Ascending aorta (tissue), 2 donors: ENCODE measurements at regions of chr18 and their contacts with region 1.

Region 1: DNA sequence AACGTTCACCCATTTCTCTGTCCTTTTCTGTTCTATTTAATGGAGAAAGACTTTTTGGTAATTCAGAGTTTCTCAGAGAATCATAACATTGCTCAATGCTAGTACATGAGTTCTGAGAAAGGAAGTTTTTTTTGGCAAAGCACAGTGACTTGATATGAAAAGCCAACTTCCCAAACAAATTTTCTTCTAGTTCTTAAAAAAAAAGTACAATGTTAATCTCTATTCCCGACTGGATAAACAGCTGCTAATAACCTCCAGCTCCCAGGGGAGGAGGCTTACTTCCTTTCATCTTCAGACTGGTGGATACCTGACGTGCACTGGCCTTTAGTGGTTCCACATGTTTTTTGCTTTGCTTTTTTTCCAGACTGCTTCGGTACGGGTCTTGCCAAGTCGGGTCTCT is 284.6 kb upstream of the CCDC68 start:
- DNase-seq: peak in 1 of 2 donors; percentile 74
- H3K4me3 ChIP-seq: peak overlapping the region; percentile 42 to 45
- H3K27ac ChIP-seq: peak overlapping the region; percentile 80 to 87
- H3K4me1 ChIP-seq: peaks cover 0 to 33% of the 10 kb centered on the region in 2 donors
- H3K27me3 ChIP-seq: no peaks in the 10 kb centered on the region
- CTCF ChIP-seq: no peak

Region 2: GRCh38 chr18:55337908-55338521 is 94.2 kb after region 1 on chr18:
- intact Hi-C with region 1: loop called (anchors 5 kb)
- DNase-seq: peak; percentile 12 to 81
- H3K4me3 ChIP-seq: peak overlapping the region; percentile 34 to 62
- H3K27ac ChIP-seq: peak overlapping the region; percentile 79 to 88
- H3K4me1 ChIP-seq: peaks cover 0 to 16% of the 10 kb centered on the region in 2 donors
- H3K27me3 ChIP-seq: no peaks in the 10 kb centered on the region
- CTCF ChIP-seq: no peak